Activated T-helper 1 cell treated with anti-CD3 and anti-CD28 coated beads, Interleukin-12 subunit alpha, Interleukin-12 subunit beta, Interleukin-2, Interleukin-4 antibody, amounts not matched to agents 30 ng/mL and 10 ng/mL and 1 ng/mL, durations not matched to agents 14 hours and 24 hours and 36 hours (primary cell): ENCODE measurements at regions of chr21 and their contacts with region 1.

Region 1: GRCh38 chr21:35616090-35616489 is 444.2 kb downstream of the SETD4 start:
- DNase-seq: no peak
- H3K4me3 Mint-ChIP-seq: no peak overlapping the region
- H3K27ac Mint-ChIP-seq: no peak overlapping the region
- H3K4me1 Mint-ChIP-seq: peaks cover 7% of the 10 kb centered on the region
- H3K27me3 Mint-ChIP-seq: peaks cover 4% of the 10 kb centered on the region

Region 2: DNA sequence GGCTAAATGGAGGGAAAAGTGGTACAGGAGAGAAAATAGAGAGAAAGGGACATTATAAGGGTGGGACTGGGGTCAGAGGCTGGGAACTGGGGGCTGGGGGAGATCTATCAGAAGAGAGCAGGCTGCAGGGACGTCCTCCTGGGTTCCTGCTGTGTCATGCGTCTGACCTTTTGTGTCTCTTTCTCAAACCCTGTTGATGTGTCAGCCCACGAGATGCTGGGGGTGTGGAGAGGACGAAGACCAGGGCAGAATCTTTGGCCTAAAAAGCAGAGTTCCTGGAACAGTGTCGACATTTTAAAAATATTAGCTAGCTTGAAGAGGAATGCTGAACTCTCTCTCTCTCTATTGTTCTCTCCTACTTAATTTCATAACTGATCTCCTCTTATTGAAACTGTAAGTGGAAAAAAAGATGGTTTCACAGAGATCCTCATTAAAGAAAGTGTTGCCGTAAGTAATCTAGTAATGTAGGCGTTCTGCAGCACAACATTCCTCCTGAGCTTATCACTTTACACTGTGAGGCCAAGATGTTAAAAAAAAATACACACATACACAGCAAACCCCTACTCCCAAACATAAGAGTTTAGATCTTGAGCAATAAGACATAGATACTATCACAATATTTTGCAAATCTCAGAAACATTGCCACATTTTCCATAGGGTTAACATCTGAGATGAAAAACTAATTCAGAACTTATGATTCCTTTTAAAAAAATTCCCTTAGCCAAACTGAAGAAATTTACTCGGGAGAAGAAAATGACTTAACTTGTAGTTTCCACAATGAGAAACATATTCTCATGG is 619.6 kb before region 1 on chr21:
- intact Hi-C with region 1: loop called (anchors 10 kb)
- DNase-seq: no peak
- H3K4me3 Mint-ChIP-seq: peak overlapping the region; percentile 23
- H3K27ac Mint-ChIP-seq: peak overlapping the region; percentile 79
- H3K4me1 Mint-ChIP-seq: peaks cover 47% of the 10 kb centered on the region
- H3K27me3 Mint-ChIP-seq: no peaks in the 10 kb centered on the region

Region 3: GRCh38 chr21:35438643-35439404 is 177.3 kb before region 1 on chr21:
- intact Hi-C with region 1: loop called (anchors 10 kb)
- DNase-seq: no peak
- H3K4me3 Mint-ChIP-seq: no peak overlapping the region
- H3K27ac Mint-ChIP-seq: no peak overlapping the region
- H3K4me1 Mint-ChIP-seq: peaks cover 14% of the 10 kb centered on the region
- H3K27me3 Mint-ChIP-seq: peaks cover 9% of the 10 kb centered on the region

Region 4: GRCh38 chr21:35664683-35665082 is 48.6 kb after region 1 on chr21:
- intact Hi-C with region 1: no loop called
- DNase-seq: no peak
- H3K4me3 Mint-ChIP-seq: no peak overlapping the region
- H3K27ac Mint-ChIP-seq: no peak overlapping the region
- H3K4me1 Mint-ChIP-seq: no peaks in the 10 kb centered on the region
- H3K27me3 Mint-ChIP-seq: peaks cover 14% of the 10 kb centered on the region